A673 (cell line): ENCODE measurements at regions of chr11 and their contacts with region 1.

Region 1: DNA sequence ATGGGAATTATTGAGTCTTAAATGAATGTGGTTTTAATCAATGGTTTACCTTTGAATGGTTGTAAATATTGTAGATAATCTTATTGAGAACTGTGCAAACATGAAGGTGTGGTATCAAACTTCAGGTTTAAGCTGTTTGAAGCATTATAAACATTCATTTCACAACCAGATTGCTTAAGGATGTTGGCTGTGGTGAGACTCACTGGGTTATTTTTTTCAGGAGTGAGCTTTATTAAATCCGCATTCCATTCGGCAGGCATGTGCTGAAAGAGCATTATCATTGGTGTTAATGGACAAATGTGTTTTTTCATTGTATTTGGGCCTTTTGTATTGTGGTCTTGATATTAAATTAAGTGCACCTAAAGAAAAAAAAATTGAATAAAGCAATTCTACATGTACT is 9.7 kb downstream of the MMP3 start:
- DNase-seq: no peak
- H3K4me3 ChIP-seq: no peak overlapping the region
- H3K27ac ChIP-seq: no peak overlapping the region
- H3K4me1 ChIP-seq: peaks cover 43% of the 10 kb centered on the region
- H3K27me3 ChIP-seq: no peaks in the 10 kb centered on the region
- CTCF ChIP-seq: no peak

Region 2: DNA sequence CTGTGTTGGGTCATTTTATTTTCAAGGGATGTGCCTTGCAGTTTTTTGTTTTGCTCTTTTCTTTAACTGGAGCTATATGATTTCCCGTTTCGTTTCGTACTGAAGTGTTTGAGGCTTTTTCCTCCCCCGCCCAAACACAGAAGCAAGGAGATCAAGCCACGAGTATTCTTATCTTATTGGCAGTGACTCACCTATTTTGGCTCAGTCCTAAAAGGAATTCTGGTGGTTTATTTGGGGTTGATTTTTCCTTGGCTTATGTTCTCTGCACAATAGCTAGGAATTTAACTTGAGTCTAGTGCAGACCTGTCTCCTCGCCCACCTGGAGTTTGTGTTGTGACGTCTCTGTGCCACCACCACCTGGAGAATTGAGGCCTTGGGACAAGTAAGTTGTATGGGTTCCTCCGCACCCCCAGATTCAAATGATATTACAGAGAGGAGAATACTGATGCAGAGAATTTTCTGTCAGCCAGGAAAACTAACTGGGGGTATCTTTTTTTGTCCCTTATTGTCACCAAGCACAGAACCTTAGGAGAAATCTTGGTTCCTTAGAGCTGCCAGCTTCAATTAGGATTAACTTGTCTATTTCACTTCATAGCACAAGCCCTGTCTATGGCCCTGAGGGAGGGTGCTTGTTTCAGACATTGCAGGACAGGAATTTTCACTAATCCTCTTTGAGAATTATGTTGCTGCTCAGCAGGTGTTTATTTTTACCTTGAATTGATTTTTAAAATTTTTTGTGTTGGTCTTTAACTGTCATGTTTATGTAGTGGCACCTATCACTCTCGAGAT is 606.8 kb before region 1 on chr11:
- CTCF ChIA-PET with region 1: interaction called, 15 read pairs
- POLR2A ChIA-PET with region 1: no interaction called
- intact Hi-C with region 1: no loop called
- DNase-seq: no peak
- H3K4me3 ChIP-seq: no peak overlapping the region
- H3K27ac ChIP-seq: no peak overlapping the region
- H3K4me1 ChIP-seq: peaks cover 11% of the 10 kb centered on the region
- H3K27me3 ChIP-seq: no peaks in the 10 kb centered on the region
- CTCF ChIP-seq: no peak